ENCODE measurements at regions of chr14 and their contacts with region 1.

Region 1: DNA sequence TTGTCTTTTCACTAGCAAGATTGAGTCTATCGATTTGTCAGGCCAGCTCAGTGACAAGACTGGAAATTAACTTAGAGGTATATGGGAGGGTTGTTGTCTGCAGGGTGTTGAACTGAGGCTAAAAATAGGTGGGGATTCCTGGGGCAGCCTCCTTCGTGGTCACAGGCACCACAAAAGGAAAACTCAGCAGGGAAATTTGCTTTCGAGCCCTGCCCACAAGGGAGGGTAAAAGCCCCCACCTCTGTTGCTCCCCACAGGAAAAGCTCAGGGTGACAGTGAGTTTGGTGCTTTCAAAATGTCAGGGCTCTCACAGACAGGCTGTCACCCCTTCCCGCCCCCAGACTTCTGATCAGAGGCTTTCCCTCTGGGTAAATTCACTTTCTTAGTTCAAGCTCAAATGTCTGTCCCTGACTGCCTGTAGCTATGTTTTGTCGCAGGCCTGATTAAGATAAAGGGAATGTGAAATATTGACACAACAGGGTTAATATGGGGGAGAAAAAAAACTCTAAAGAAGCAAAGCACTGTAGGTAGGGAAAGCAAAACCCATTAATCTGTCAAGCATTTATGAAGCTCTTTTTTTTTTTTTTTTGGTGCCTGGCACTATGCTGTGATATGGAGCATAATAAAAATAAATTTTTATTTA is 11.7 kb upstream of the NFKBIA start:
- DNase-seq: peak; percentile 39
- ATAC-seq: peak; percentile 32
- H3K4me3 ChIP-seq: no peak overlapping the region
- H3K4me3 Mint-ChIP-seq: peak overlapping the region; percentile 44
- H3K27ac ChIP-seq: no peak overlapping the region
- H3K27ac Mint-ChIP-seq: peak overlapping the region; percentile 15
- H3K4me1 ChIP-seq: peaks cover 8 to 26% of the 10 kb centered on the region in 2 donors
- H3K4me1 Mint-ChIP-seq: peaks cover 25% of the 10 kb centered on the region
- H3K27me3 ChIP-seq: no peaks in the 10 kb centered on the region
- H3K27me3 Mint-ChIP-seq: no peaks in the 10 kb centered on the region
- CTCF ChIP-seq: no peak

Region 2: GRCh38 chr14:35140718-35141581 is 275.3 kb before region 1 on chr14:
- CTCF ChIA-PET with region 1: interaction called, 512 read pairs
- POLR2A ChIA-PET with region 1: interaction called, 10 read pairs
- intact Hi-C with region 1: loop called (anchors 1 kb)
- DNase-seq: peak; percentile 29
- ATAC-seq: peak; percentile 41
- H3K4me3 ChIP-seq: no peak overlapping the region
- H3K4me3 Mint-ChIP-seq: no peak overlapping the region
- H3K27ac ChIP-seq: no peak overlapping the region
- H3K27ac Mint-ChIP-seq: no peak overlapping the region
- H3K4me1 ChIP-seq: no peaks in the 10 kb centered on the region
- H3K4me1 Mint-ChIP-seq: no peaks in the 10 kb centered on the region
- H3K27me3 ChIP-seq: no peaks in the 10 kb centered on the region
- H3K27me3 Mint-ChIP-seq: no peaks in the 10 kb centered on the region
- CTCF ChIP-seq: peak; percentile 80

Region 3: GRCh38 chr14:35229495-35230089 is 186.6 kb before region 1 on chr14:
- CTCF ChIA-PET with region 1: interaction called, 302 read pairs
- POLR2A ChIA-PET with region 1: no interaction called
- intact Hi-C with region 1: loop called (anchors 1 kb)
- DNase-seq: peak; percentile 57
- ATAC-seq: peak; percentile 36
- H3K4me3 ChIP-seq: no peak overlapping the region
- H3K4me3 Mint-ChIP-seq: no peak overlapping the region
- H3K27ac ChIP-seq: no peak overlapping the region
- H3K27ac Mint-ChIP-seq: no peak overlapping the region
- H3K4me1 ChIP-seq: no peaks in the 10 kb centered on the region
- H3K4me1 Mint-ChIP-seq: no peaks in the 10 kb centered on the region
- H3K27me3 ChIP-seq: no peaks in the 10 kb centered on the region
- H3K27me3 Mint-ChIP-seq: no peaks in the 10 kb centered on the region
- CTCF ChIP-seq: peak; percentile 67

Region 4: DNA sequence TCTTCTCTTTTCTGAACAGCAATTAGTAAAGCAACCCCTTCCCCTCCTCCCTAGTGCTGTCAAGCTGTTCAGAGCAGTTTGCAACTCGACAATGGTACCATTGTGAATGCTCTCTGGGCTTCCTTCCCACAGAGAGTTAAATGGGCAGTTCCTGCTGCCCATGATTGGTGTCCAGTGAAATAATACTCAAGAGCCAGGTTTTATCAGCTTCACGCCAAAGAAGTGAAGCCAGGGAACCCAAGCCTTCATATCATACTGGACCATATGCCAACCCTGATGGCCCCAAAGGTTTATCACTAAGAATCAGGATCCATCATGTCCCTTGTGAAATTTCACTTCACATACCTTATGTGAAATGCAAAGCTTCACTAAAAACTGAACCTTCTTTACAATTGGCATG is 142.5 kb after region 1 on chr14:
- CTCF ChIA-PET with region 1: no interaction called
- POLR2A ChIA-PET with region 1: no interaction called
- intact Hi-C with region 1: no loop called
- DNase-seq: no peak
- ATAC-seq: no peak
- H3K4me3 ChIP-seq: no peak overlapping the region
- H3K4me3 Mint-ChIP-seq: no peak overlapping the region
- H3K27ac ChIP-seq: no peak overlapping the region
- H3K27ac Mint-ChIP-seq: no peak overlapping the region
- H3K4me1 ChIP-seq: no peaks in the 10 kb centered on the region
- H3K4me1 Mint-ChIP-seq: no peaks in the 10 kb centered on the region
- H3K27me3 ChIP-seq: no peaks in the 10 kb centered on the region
- H3K27me3 Mint-ChIP-seq: no peaks in the 10 kb centered on the region
- CTCF ChIP-seq: no peak

Region 5: DNA sequence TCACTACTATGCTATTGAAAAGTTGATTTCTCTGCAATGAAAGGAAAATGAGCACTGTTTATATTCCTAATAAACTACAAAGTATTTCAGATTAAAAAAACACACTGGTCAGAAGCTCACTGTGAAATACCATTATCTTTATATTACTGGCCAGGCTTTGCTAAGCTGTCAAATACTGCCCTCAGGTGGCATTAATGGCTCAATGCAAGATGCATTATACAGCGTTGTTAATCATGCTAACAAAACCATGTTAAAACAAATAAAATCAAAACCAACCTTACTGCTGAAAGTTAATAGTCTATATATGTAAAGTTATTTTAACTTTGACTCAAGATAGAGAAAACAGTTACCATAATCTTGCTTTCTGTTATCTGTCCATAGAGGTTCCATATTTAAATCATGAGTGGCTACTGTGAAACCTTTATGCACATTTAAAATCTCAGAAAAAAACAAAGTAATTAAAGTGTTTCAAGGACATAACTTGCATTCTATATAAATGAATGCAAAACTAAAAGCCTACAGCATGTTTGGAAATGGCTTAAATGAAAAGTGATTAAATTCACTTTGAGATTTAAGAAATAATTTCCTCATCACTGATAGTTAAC is 271.2 kb after region 1 on chr14:
- CTCF ChIA-PET with region 1: interaction called, 6 read pairs
- POLR2A ChIA-PET with region 1: no interaction called
- intact Hi-C with region 1: loop called (anchors 5 kb)
- DNase-seq: peak; percentile 30
- ATAC-seq: peak; percentile 51
- H3K4me3 ChIP-seq: no peak overlapping the region
- H3K4me3 Mint-ChIP-seq: no peak overlapping the region
- H3K27ac ChIP-seq: no peak overlapping the region
- H3K27ac Mint-ChIP-seq: no peak overlapping the region
- H3K4me1 ChIP-seq: peaks cover 0 to 3% of the 10 kb centered on the region in 2 donors
- H3K4me1 Mint-ChIP-seq: peaks cover 6% of the 10 kb centered on the region
- H3K27me3 ChIP-seq: no peaks in the 10 kb centered on the region
- H3K27me3 Mint-ChIP-seq: no peaks in the 10 kb centered on the region
- CTCF ChIP-seq: peak; percentile 83

Region 6: DNA sequence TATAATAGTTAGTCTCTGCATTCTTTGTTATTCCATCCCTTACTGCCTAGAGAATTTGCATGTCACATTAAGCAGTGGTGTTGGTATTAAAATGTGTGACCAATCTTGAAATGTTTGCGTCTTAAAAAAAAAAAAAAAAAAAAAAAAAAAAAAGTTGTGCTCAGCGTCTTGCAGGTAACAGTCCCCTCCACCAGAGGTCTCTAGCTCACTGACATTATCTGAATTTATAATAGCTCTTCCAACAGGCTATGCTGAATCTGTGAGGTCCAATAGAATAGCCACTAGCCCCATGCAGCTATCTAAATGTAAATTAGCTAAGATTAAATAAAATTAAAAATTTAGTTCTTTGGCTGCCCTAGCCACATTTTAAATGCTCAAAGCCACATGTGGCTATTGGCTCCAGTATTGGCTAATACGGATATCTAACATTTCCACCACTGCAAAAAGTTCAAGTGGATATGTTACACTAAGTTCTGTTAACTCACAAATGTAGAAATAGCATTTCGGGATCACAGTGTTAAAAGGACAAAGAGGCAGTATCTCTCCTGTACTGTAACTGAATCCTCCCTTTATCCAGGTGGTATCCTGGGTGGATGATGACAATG is 1137.5 kb after region 1 on chr14:
- CTCF ChIA-PET with region 1: no interaction called
- POLR2A ChIA-PET with region 1: no interaction called
- intact Hi-C with region 1: no loop called
- DNase-seq: no peak
- ATAC-seq: no peak
- H3K4me3 ChIP-seq: no peak overlapping the region
- H3K4me3 Mint-ChIP-seq: no peak overlapping the region
- H3K27ac ChIP-seq: no peak overlapping the region
- H3K27ac Mint-ChIP-seq: no peak overlapping the region
- H3K4me1 ChIP-seq: no peaks in the 10 kb centered on the region
- H3K4me1 Mint-ChIP-seq: no peaks in the 10 kb centered on the region
- H3K27me3 ChIP-seq: no peaks in the 10 kb centered on the region
- H3K27me3 Mint-ChIP-seq: peaks cover 9% of the 10 kb centered on the region
- CTCF ChIP-seq: peak; percentile 32